ENCODE measurements at regions of chr12 and their contacts with region 1.

Region 1: DNA sequence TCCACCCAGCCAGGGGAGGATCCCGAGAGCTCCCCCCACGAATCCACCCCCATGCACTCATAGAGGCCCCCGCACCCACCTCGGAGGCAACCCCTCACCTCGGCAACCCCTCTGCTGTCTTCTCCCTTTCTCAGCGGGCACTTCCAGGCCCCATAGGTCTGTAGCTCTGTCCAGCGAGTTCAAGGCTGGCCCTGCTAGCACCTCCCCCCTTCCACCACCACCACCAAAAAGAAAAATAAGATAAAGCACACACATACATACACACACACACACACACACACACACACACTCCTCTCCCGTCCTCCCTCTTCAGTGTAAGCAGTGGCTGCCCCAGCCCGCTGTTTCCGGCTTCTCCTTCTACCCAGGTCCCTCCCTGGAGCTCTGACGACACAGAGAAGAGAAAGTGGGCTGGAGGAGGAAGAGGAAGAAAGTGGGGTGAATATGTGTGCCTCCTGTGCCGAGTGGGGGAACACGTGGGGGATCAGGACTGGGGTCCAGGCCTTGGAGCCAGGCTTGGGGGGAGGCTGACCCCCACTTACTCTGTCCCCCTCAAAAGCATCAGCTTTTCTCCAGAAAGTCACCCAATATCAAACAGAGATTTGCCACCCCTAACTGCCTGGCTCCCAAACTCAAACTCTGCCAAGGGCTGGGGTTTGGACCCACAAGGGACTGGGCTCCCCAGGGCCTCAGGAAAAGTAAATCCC is at the start of gene STAT6:
- DNase-seq: peak; percentile 95
- ATAC-seq: peak; percentile 76
- H3K4me3 Mint-ChIP-seq: peak within 1 kb of the TSS; percentile 95
- H3K27ac Mint-ChIP-seq: peak within 1 kb of the TSS; percentile 96
- H3K4me1 Mint-ChIP-seq: peaks cover 29% of the 10 kb centered on the region
- H3K27me3 Mint-ChIP-seq: no peaks in the 10 kb centered on the region
- total RNA-seq, gene STAT6: 99.1 to 104 TPM

Region 2: DNA sequence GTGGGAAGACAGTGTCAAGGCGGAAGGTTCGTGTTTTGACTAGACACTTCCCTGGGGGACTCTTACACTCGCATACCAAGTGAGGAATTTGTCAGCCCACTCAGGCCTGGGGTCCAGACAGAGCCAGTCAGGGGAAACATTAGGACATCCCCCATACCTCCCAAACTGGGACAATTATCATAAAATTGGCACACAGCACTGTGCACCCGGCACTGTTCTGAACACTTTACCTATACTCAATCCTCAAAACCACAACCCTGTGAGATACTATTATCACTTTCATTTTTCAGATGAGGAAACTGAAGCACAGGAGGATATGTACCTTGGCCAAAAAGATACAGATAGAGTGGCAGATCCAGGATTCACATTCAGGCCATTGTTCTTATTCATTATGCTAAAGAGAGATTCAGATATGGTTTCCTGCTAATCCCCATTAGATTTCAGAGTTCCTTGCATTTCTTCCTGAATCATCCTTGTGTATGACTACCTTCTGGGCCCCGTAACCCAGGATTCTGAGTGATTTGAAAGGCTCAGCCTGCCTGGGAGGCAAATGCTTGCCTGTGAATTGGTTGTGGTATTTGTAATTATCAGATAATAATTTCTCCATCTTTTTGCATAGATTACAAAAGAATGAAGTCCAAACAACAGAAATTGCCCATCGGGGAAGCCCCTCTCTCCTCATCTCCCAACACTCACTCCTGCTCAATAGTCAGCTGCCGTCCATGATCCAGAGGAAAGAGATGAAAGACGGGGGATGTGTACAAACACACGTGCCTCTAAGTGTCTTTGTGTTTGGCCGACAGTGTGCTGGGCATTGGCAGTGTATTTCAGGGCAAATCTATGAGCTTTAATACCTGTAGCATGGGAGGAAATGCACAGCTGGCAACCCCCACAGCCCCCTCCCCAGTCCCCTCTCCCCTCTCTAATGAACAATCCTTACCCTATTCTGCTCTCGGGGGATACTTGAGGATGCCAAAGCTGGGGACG is 99.5 kb before region 1 on chr12:
- CTCF ChIA-PET with region 1: interaction called, 86 read pairs
- DNase-seq: peak; percentile 53
- ATAC-seq: peak; percentile 73
- H3K4me3 Mint-ChIP-seq: peak overlapping the region; percentile 9
- H3K27ac Mint-ChIP-seq: no peak overlapping the region
- H3K4me1 Mint-ChIP-seq: peaks cover 23% of the 10 kb centered on the region
- H3K27me3 Mint-ChIP-seq: peaks cover 26% of the 10 kb centered on the region

Region 3: DNA sequence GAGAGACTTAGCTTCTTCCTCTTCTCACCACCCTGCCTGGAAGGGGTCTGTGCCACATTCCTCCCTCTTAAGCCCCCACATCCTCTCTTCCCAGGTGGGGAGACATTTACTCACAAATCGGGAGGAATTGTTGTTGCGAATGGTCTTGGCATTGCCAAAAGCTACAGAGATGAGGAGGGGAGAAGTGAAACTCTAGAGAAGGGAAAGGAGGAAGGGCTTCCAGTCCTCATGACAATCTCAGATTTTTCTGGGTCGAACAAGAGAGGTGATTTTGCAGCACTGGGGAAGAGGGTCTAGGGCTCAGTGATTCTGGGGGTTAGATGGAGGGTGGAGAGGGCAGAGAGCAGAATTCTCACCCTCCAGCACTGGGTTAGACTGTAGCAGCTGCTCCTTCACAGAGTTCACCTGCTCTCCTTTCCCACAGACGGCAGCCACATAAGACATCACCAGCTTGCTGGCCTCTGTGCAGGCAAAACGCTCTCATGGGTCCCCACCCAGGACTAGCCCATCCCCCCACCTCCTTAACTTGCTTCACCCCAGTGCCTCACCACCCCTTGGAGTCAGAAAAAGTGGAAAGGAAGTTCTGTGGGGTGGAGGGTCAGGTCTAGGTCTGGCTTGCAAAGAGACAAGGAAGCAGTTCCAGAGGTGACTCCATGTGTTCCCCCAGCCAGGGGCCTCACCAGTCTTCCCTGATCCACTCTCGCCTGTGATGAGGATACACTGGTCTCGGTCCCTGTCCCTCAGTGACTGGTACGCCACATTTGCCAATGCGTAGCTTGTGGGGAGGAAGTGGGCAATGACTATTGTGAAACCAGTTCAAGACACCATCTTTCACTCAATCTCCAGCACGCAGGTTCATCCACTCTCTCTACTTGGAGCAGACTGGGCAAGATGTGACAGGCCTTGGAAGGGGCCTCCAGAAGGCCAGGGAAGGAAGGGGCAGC is 64.0 kb before region 1 on chr12:
- CTCF ChIA-PET with region 1: interaction called, 43 read pairs
- DNase-seq: peak; percentile 89
- ATAC-seq: peak; percentile 85
- H3K4me3 Mint-ChIP-seq: peak overlapping the region; percentile 24
- H3K27ac Mint-ChIP-seq: peak overlapping the region; percentile 74
- H3K4me1 Mint-ChIP-seq: peaks cover 37% of the 10 kb centered on the region
- H3K27me3 Mint-ChIP-seq: peaks cover 22% of the 10 kb centered on the region

Region 4: DNA sequence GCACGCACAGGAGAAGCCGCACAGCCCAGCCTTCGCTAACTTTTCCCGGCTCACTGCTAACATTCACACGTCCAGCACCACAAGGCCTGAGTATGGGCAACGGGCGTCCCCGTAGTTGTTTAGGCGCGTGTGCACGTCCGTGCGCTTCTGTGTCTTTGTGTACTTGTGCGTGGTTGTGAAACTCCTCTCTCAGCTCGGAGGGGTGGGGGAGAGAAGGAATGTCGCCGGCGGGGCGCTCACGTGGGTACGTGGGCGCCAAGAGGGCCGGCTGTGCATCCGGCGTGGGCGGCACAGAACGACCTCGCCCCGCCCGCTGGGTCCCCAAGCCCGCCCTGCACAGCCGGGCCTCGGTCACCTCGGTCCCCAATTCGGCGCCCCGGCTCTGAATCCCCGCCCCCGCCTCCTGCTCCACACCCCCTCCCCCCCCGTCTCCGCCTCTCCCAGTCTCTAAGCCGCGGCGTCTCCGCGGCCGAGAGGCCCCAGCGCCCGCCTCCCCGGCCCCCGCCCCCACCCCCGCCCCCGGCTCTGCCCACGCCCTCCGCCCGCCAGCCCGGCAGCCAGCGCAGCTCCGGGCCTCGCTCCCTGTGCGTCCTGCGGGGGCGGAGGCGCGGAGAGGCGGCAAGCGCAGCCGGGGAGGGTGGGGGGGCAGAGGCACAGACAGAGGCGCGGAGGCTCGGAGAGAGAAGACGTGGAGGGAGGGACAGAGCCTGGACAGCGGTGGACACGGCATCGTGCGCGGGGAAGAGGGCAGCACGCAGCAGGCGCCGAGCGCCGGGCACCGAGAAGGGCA is 22.5 kb before region 1 on chr12 and contains the start of gene NAB2:
- CTCF ChIA-PET with region 1: interaction called, 202 read pairs
- DNase-seq: peak; percentile 97
- ATAC-seq: peak; percentile 80
- H3K4me3 Mint-ChIP-seq: peak within 1 kb of the TSS; percentile 84
- H3K27ac Mint-ChIP-seq: peak within 1 kb of the TSS; percentile 88
- H3K4me1 Mint-ChIP-seq: peaks cover 58% of the 10 kb centered on the region
- H3K27me3 Mint-ChIP-seq: no peaks in the 10 kb centered on the region
- total RNA-seq, gene NAB2: 10.0 to 31.1 TPM

Region 5: DNA sequence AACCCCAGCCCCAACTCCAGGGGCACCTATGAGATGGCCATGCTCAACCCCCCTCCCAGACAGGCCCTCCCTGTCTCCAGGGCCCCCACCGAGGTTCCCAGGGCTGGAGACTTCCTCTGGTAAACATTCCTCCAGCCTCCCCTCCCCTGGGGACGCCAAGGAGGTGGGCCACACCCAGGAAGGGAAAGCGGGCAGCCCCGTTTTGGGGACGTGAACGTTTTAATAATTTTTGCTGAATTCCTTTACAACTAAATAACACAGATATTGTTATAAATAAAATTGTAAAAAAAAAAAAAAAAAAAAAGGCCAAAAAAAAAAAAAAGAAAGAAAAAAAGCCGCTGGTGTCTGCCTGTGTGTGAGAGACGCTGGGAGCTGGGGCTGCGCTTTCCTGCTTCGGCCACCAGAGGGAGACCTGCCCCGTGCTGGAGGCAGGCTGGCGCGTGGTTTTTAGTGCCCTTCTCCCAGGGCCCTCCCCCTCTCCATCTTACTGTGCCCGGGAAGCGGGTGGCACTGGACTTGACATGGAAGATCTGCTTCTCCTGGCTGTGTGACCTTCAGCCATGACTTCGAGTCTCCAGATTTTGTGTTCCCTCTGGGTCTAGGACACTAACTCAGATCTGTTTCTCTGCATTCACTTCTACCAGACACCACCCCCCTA is 102.0 kb after region 1 on chr12:
- CTCF ChIA-PET with region 1: interaction called, 12 read pairs
- DNase-seq: peak; percentile 89
- ATAC-seq: peak; percentile 57
- H3K4me3 Mint-ChIP-seq: no peak overlapping the region
- H3K27ac Mint-ChIP-seq: no peak overlapping the region
- H3K4me1 Mint-ChIP-seq: peaks cover 30% of the 10 kb centered on the region
- H3K27me3 Mint-ChIP-seq: peaks cover 41% of the 10 kb centered on the region